Common myeloid progenitor, CD34-positive (primary cell): ENCODE measurements at regions of chr4 and their contacts with region 1.

Region 1: DNA sequence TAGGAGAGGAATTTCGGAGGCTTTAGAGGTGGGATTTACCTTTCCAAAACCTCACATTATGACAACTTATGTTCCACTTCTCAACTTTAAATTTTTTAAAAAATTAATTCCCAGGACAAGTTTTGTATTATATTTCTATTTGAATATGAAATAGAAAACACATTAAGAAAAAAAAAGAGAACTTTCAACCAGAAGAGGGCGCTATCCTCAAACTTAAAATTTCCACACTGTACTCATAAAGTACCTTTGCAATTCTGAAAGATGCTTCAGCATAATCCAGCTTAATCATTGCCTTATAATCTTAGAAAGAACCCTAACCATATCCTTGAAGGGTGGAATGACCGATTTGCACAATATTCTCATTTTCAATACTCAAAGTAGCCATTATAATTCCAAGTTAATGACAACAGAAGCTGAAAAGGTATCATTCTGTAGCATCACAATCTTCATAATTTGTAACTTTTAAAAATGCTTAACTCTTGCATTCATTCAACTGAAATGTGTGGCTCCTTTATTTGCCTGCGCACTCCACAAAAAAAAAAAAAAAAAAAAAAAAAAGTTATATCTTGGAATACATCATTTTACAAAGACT is 158.0 kb downstream of the KCNIP4 start:
- DNase-seq: peak; percentile 32 to 61 (median 46)
- H3K4me3 ChIP-seq: no peak overlapping the region
- H3K27ac ChIP-seq: no peak overlapping the region
- H3K4me1 ChIP-seq: no peaks in the 10 kb centered on the region
- H3K27me3 ChIP-seq: peaks cover 0 to 2% (median 0%) of the 10 kb centered on the region in 5 experiments

Region 2: GRCh38 chr4:21638171-21638725 is 152.3 kb before region 1 on chr4:
- CTCF ChIA-PET with region 1: no interaction called
- POLR2A ChIA-PET with region 1: no interaction called
- DNase-seq: no peak
- H3K4me3 ChIP-seq: no peak overlapping the region
- H3K27ac ChIP-seq: no peak overlapping the region
- H3K4me1 ChIP-seq: no peaks in the 10 kb centered on the region
- H3K27me3 ChIP-seq: no peaks in the 10 kb centered on the region

Region 3: GRCh38 chr4:21765810-21766407 is 24.6 kb before region 1 on chr4:
- CTCF ChIA-PET with region 1: interaction called, 10 read pairs
- POLR2A ChIA-PET with region 1: no interaction called
- DNase-seq: peak; percentile 28 to 61 (median 44)
- H3K4me3 ChIP-seq: no peak overlapping the region
- H3K27ac ChIP-seq: no peak overlapping the region
- H3K4me1 ChIP-seq: peaks cover 0 to 8% (median 4%) of the 10 kb centered on the region in 4 experiments
- H3K27me3 ChIP-seq: peaks cover 0 to 37% (median 0%) of the 10 kb centered on the region in 5 experiments

Region 4: DNA sequence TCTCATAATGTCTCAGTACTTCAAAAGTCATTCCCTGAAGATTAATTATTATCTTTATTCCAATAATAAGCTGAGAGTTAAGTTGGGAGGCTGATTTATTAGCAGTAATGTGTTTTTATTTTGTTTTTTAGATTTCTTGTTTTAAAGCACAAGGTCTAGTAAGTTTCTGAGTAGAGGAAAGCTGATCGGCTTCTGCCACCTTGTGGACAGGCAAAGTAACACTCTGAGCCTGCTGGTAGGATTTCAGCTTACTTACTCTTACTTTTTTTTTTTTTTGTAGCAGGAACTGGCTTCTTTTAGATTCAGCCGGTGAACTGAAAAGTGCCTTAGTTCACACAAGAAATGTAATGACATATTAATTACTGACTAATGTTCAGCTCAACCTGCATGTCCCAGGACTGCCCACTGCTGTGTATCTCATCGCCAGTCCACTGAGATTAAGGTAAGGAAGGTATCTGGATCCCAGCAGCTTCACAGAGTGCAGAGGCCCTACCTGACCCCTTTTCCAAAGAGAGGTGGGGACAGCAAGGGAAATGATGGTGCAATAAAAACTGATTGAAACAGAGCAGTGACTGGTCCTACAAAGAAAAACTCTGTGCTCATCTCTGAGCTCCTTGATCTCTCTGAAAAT is 598.8 kb after region 1 on chr4:
- CTCF ChIA-PET with region 1: interaction called, 69 read pairs
- POLR2A ChIA-PET with region 1: no interaction called
- DNase-seq: peak; percentile 73 to 89 (median 86)
- H3K4me3 ChIP-seq: no peak overlapping the region
- H3K27ac ChIP-seq: no peak overlapping the region
- H3K4me1 ChIP-seq: no peaks in the 10 kb centered on the region
- H3K27me3 ChIP-seq: no peaks in the 10 kb centered on the region